BJ (cell line): ENCODE measurements at regions of chr15 and their contacts with region 1.

Region 1: DNA sequence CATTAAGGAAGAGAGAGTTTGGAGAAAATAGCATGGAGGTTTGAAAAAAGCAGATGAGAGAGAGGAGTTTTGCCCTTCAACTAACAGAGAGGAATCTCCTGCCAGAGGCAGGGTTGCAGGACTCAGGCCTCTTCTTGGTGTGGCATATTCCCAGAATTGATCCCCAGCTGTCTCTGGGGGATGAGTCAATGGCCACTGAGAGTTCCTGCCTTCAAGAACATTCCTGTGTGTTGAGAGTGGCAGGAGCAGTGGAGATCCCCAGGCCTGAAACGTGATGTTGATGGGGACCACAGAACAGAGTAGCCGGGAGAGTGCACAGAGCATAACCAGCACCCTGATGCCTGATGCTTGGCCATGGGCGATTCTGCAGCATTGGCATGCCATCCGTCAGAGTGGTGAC is 348.4 kb upstream of the THBS1 start:
- DNase-seq: peak; percentile 85
- H3K4me3 ChIP-seq: no peak overlapping the region
- H3K27me3 ChIP-seq: no peaks in the 10 kb centered on the region
- CTCF ChIP-seq: no peak

Region 2: GRCh38 chr15:39270934-39271333 is 38.4 kb after region 1 on chr15:
- CTCF ChIA-PET with region 1: no interaction called
- POLR2A ChIA-PET with region 1: interaction called, 11 read pairs
- DNase-seq: peak; percentile 94
- H3K4me3 ChIP-seq: no peak overlapping the region
- H3K27me3 ChIP-seq: no peaks in the 10 kb centered on the region
- CTCF ChIP-seq: no peak

Region 3: DNA sequence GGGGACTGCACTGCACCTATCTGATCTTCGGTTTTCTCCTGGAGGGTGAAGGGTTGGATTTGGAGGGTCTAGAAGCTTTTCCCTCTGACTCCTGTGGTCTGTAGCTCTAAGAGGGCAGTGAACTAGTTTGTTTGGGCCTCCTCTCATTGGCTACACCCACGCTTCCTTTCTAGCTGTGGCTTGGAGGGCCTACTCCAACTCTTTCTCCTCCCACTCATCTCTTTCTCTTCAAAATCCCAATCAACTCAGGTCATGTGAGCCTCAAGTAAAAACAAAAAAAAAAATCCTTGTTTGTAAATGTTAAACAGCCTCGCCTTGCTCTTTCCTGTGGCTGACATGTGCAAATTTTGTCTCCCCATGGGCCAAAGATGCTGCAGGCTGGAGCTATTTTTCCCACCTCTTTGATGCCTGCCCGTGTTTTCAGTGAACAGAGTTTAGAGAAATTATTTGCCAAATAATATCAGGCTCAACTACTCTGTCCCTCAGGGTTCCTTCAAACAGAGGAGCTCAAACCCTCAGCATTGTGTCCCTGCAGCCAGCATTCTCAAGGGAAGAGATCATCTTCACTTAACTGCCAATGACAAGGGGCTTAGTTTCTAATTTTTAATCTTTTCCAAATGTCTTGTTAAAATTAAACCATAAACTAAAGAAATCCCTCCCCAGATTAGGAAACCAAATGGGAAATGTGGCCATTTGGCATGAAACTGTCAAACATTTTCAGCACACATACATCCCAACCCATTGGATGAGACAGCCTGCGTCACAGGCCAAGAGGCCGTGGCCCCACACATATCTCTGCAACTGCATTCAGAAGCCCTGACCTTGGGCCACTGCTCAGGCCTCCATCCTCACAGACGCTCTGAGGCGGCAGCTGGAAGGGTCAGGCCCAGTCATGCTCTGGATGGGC is 233.6 kb after region 1 on chr15:
- CTCF ChIA-PET with region 1: no interaction called
- POLR2A ChIA-PET with region 1: interaction called, 12 read pairs
- DNase-seq: peak; percentile 94
- H3K4me3 ChIP-seq: no peak overlapping the region
- H3K27me3 ChIP-seq: no peaks in the 10 kb centered on the region
- CTCF ChIP-seq: no peak